ENCODE measurements at regions of chr3 and their contacts with region 1.

Region 1: DNA sequence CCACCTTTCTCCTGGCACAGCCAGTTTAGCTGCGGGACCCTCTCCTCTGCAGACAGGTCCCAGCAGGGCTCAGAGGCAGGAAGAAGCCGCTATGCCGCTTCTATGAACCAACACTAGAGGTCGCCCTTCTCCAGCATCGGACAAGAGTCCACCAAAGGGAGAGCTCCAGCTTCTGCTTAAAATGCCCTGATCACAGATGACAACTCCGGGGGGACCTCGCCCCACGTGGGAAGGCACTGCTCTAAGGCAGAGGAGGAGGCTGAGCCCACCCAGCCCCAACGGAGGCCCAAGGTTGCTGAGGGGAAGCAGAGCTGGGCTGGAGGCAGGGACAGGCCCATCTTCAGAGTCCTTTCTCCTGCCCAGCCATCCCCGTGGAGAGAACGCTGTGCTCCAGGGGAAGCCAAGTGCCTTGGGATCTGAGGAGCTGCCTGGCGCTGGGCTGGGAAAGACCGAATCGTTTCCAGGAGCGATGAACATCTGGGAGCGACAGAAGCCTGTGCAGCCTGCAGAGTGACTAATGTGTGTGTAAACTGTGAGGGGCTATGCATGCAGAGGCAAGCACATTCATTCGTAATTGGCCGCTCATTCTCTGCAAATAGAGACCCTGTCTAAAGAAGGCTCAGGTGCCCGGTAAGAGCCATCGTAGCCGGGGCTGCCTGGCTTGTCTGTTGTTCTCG is 43.5 kb upstream of the BDH1 start:
- DNase-seq: peak; percentile 56 to 86 (median 75)
- ATAC-seq: peak; percentile 97
- H3K4me3 ChIP-seq: no peak overlapping the region
- H3K4me3 Mint-ChIP-seq: no peak overlapping the region
- H3K27ac ChIP-seq: no peak overlapping the region
- H3K27ac Mint-ChIP-seq: no peak overlapping the region
- H3K4me1 ChIP-seq: peaks cover 9% of the 10 kb centered on the region
- H3K4me1 Mint-ChIP-seq: peaks cover 4% of the 10 kb centered on the region
- H3K27me3 ChIP-seq: no peaks in the 10 kb centered on the region
- H3K27me3 Mint-ChIP-seq: no peaks in the 10 kb centered on the region
- CTCF ChIP-seq: peak; percentile 89

Region 2: GRCh38 chr3:197525706-197526105 is 73.5 kb before region 1 on chr3:
- CTCF ChIA-PET with region 1: no interaction called
- POLR2A ChIA-PET with region 1: no interaction called
- intact Hi-C with region 1: no loop called
- DNase-seq: no peak
- ATAC-seq: no peak
- H3K4me3 ChIP-seq: no peak overlapping the region
- H3K4me3 Mint-ChIP-seq: no peak overlapping the region
- H3K27ac ChIP-seq: no peak overlapping the region
- H3K27ac Mint-ChIP-seq: peak overlapping the region; percentile 77
- H3K4me1 ChIP-seq: no peaks in the 10 kb centered on the region
- H3K4me1 Mint-ChIP-seq: no peaks in the 10 kb centered on the region
- H3K27me3 ChIP-seq: no peaks in the 10 kb centered on the region
- H3K27me3 Mint-ChIP-seq: no peaks in the 10 kb centered on the region
- CTCF ChIP-seq: no peak

Region 3: DNA sequence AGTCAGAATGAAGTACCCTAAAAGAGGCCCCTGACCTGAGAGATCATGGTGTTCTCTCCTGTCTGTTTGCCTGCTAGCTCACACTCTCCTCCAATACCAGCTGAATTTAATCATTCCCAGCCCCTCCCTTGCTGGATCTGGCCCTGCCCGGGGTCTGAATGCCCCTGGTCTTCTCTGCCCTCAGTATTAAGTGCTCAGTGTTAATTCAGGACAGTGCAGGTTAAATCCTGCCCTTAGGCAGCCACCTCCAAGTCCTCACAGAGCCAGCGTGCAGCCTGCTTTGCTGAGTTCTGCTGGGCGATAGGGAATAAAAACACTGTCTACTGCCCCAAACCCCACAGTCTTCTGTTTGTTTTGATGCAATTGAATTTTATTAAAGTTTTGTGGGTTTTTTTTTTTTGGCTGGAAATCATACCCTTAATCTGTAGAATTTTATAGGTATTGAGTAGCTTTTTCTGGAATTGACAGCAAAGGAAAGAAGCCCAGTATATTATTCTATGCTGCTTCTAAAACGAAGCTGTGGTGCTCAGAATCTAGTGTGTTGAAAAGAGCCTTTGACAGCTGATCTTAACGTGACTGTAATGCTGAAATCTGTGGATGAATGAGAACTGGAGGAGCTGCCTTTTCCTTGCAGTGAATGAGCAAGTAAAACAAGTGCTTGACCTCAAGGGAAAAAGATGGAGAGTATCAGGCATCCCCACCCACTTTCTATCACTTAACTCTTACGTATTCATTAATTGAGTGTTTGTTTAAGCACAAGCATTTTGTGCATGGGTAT is 31.1 kb before region 1 on chr3:
- CTCF ChIA-PET with region 1: interaction called, 12 read pairs
- POLR2A ChIA-PET with region 1: no interaction called
- intact Hi-C with region 1: no loop called
- DNase-seq: no peak
- ATAC-seq: no peak
- H3K4me3 ChIP-seq: no peak overlapping the region
- H3K4me3 Mint-ChIP-seq: no peak overlapping the region
- H3K27ac ChIP-seq: no peak overlapping the region
- H3K27ac Mint-ChIP-seq: no peak overlapping the region
- H3K4me1 ChIP-seq: no peaks in the 10 kb centered on the region
- H3K4me1 Mint-ChIP-seq: no peaks in the 10 kb centered on the region
- H3K27me3 ChIP-seq: peaks cover 0 to 4% of the 10 kb centered on the region in 2 experiments
- H3K27me3 Mint-ChIP-seq: peaks cover 23% of the 10 kb centered on the region
- CTCF ChIP-seq: no peak

Region 4: DNA sequence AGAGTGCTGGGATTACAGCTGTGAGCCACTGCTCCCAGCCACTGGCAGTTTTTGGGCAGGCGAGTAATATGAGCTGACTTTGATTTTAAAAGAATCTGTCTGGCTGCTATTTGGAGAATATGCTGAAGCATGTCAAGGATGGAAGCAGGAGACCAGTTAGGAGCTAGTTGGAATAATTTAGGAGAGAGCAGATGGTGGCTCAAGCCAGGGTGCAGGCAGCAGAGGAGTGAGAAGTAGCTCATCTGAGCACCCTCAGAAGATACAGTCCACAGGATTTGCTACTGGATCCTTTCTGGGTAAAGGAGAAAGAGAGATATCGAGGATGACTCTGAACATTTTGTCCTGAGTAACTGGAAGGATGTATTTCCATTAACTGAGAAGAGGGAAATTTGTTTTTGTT is 13.0 kb before region 1 on chr3:
- CTCF ChIA-PET with region 1: interaction called, 22 read pairs
- POLR2A ChIA-PET with region 1: no interaction called
- intact Hi-C with region 1: no loop called
- DNase-seq: no peak
- ATAC-seq: no peak
- H3K4me3 ChIP-seq: no peak overlapping the region
- H3K4me3 Mint-ChIP-seq: no peak overlapping the region
- H3K27ac ChIP-seq: no peak overlapping the region
- H3K27ac Mint-ChIP-seq: no peak overlapping the region
- H3K4me1 ChIP-seq: no peaks in the 10 kb centered on the region
- H3K4me1 Mint-ChIP-seq: no peaks in the 10 kb centered on the region
- H3K27me3 ChIP-seq: no peaks in the 10 kb centered on the region
- H3K27me3 Mint-ChIP-seq: peaks cover 3% of the 10 kb centered on the region
- CTCF ChIP-seq: no peak

Region 5: GRCh38 chr3:197613199-197613598 is 14.0 kb after region 1 on chr3:
- CTCF ChIA-PET with region 1: interaction called, 50 read pairs
- POLR2A ChIA-PET with region 1: interaction called, 6 read pairs
- intact Hi-C with region 1: loop called in 1 of 2 experiments (anchors 1 kb)
- DNase-seq: peak in 5 of 9 experiments; percentile 25 to 89 (median 71)
- ATAC-seq: peak; percentile 89
- H3K4me3 ChIP-seq: no peak overlapping the region
- H3K4me3 Mint-ChIP-seq: peak overlapping the region; percentile 17
- H3K27ac ChIP-seq: peak overlapping the region; percentile 36 to 51
- H3K27ac Mint-ChIP-seq: peak overlapping the region; percentile 89
- H3K4me1 ChIP-seq: peaks cover 20% of the 10 kb centered on the region
- H3K4me1 Mint-ChIP-seq: peaks cover 26% of the 10 kb centered on the region
- H3K27me3 ChIP-seq: no peaks in the 10 kb centered on the region
- H3K27me3 Mint-ChIP-seq: no peaks in the 10 kb centered on the region
- CTCF ChIP-seq: no peak

Region 6: DNA sequence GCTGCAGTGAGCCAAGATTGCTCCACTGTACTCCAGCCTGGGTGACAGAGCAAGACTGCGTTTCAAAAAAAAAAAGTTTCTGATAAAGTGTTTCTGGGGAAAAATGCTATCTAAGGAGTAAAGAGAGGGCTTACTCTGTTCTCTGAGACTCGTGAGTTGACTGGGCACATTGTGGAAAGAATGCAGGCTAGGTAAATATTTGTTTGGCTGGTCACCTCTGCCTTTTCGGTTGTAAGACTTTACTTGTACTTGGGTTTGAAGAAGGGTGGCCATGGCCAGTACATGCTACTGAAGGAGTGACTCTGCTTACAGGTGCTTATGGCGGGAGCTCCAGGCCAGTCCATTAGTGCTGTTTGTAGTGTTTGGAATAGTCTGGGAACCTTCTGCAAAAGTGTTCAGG is 68.8 kb after region 1 on chr3:
- CTCF ChIA-PET with region 1: interaction called, 13 read pairs
- POLR2A ChIA-PET with region 1: interaction called, 3 read pairs
- intact Hi-C with region 1: loop called in 1 of 2 experiments (anchors 2 kb)
- DNase-seq: no peak
- ATAC-seq: no peak
- H3K4me3 ChIP-seq: no peak overlapping the region
- H3K4me3 Mint-ChIP-seq: no peak overlapping the region
- H3K27ac ChIP-seq: no peak overlapping the region
- H3K27ac Mint-ChIP-seq: no peak overlapping the region
- H3K4me1 ChIP-seq: no peaks in the 10 kb centered on the region
- H3K4me1 Mint-ChIP-seq: no peaks in the 10 kb centered on the region
- H3K27me3 ChIP-seq: no peaks in the 10 kb centered on the region
- H3K27me3 Mint-ChIP-seq: no peaks in the 10 kb centered on the region
- CTCF ChIP-seq: no peak

Region 7: DNA sequence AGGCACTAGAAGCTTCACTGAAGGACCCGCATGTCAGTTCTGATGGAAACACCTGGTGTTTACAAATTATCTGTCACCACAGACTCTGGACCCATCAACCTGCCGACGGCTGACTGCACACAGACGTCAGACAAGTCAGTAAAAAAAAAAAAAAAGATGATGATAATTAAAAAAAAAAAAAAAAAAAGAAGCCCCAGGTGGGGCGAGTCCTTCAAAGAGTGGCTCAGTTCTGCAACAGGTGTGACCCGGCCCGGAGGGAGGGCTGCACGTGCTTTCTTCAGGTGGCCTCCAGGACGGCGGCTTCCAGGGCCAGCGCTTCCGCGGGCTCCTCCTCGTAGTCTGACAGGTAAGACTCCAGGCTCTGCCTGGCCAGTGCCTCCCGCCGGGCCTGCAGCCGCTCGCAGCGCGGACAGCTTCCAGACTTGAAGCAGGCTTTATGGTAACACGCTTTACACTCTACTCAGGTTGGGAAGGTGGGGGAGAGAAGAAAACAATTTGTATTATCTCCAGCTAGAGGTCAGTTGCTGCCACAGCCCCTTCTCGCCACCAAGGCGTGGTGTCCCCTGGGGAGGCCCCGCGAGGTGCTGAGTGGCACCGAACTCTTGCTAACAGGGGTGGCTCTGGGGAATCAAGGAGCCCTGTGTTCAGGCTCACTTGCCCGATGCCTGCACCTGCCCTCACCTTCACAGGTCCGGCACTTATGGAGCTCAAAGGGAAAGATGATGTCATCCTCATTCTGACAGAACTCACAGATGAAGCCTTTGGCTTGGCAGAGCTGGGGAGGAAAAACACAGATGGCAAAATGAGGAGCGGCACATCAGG is 75.7 kb after region 1 on chr3:
- CTCF ChIA-PET with region 1: interaction called, 13 read pairs
- POLR2A ChIA-PET with region 1: no interaction called
- intact Hi-C with region 1: no loop called
- DNase-seq: peak in 1 of 9 experiments; percentile 17
- ATAC-seq: no peak
- H3K4me3 ChIP-seq: no peak overlapping the region
- H3K4me3 Mint-ChIP-seq: no peak overlapping the region
- H3K27ac ChIP-seq: no peak overlapping the region
- H3K27ac Mint-ChIP-seq: no peak overlapping the region
- H3K4me1 ChIP-seq: no peaks in the 10 kb centered on the region
- H3K4me1 Mint-ChIP-seq: no peaks in the 10 kb centered on the region
- H3K27me3 ChIP-seq: no peaks in the 10 kb centered on the region
- H3K27me3 Mint-ChIP-seq: no peaks in the 10 kb centered on the region
- CTCF ChIP-seq: no peak

Region 8: GRCh38 chr3:197758512-197758911 is 159.3 kb after region 1 on chr3:
- CTCF ChIA-PET with region 1: no interaction called
- POLR2A ChIA-PET with region 1: no interaction called
- intact Hi-C with region 1: no loop called
- DNase-seq: no peak
- ATAC-seq: no peak
- H3K4me3 ChIP-seq: no peak overlapping the region
- H3K4me3 Mint-ChIP-seq: no peak overlapping the region
- H3K27ac ChIP-seq: no peak overlapping the region
- H3K27ac Mint-ChIP-seq: no peak overlapping the region
- H3K4me1 ChIP-seq: peaks cover 14% of the 10 kb centered on the region
- H3K4me1 Mint-ChIP-seq: peaks cover 20% of the 10 kb centered on the region
- H3K27me3 ChIP-seq: no peaks in the 10 kb centered on the region
- H3K27me3 Mint-ChIP-seq: no peaks in the 10 kb centered on the region
- CTCF ChIP-seq: no peak

Region 9: GRCh38 chr3:197801891-197802778 is 202.9 kb after region 1 on chr3:
- CTCF ChIA-PET with region 1: no interaction called
- POLR2A ChIA-PET with region 1: no interaction called
- intact Hi-C with region 1: loop called in 1 of 2 experiments (anchors 5 kb)
- DNase-seq: peak in 5 of 9 experiments; percentile 24 to 65 (median 32)
- ATAC-seq: peak; percentile 70
- H3K4me3 ChIP-seq: no peak overlapping the region
- H3K4me3 Mint-ChIP-seq: peak overlapping the region; percentile 13
- H3K27ac ChIP-seq: peak overlapping the region in 1 of 2 experiments; percentile 27
- H3K27ac Mint-ChIP-seq: peak overlapping the region; percentile 74
- H3K4me1 ChIP-seq: peaks cover 22% of the 10 kb centered on the region
- H3K4me1 Mint-ChIP-seq: peaks cover 50% of the 10 kb centered on the region
- H3K27me3 ChIP-seq: no peaks in the 10 kb centered on the region
- H3K27me3 Mint-ChIP-seq: no peaks in the 10 kb centered on the region
- CTCF ChIP-seq: peak; percentile 71